PC-9 (cell line): ENCODE measurements at regions of chr20 and their contacts with region 1.

Region 1: GRCh38 chr20:47392015-47392720 is 35.7 kb upstream of the ZMYND8 start:
- DNase-seq: peak; percentile 80 to 100
- H3K4me3 ChIP-seq: peak overlapping the region; percentile 33; the same call in 1 of the 2 replicates
- H3K27ac ChIP-seq: peak overlapping the region; percentile 99
- H3K4me1 ChIP-seq: peaks cover 64% of the 10 kb centered on the region
- H3K27me3 ChIP-seq: no peaks in the 10 kb centered on the region
- CTCF ChIP-seq: no peak

Region 2: DNA sequence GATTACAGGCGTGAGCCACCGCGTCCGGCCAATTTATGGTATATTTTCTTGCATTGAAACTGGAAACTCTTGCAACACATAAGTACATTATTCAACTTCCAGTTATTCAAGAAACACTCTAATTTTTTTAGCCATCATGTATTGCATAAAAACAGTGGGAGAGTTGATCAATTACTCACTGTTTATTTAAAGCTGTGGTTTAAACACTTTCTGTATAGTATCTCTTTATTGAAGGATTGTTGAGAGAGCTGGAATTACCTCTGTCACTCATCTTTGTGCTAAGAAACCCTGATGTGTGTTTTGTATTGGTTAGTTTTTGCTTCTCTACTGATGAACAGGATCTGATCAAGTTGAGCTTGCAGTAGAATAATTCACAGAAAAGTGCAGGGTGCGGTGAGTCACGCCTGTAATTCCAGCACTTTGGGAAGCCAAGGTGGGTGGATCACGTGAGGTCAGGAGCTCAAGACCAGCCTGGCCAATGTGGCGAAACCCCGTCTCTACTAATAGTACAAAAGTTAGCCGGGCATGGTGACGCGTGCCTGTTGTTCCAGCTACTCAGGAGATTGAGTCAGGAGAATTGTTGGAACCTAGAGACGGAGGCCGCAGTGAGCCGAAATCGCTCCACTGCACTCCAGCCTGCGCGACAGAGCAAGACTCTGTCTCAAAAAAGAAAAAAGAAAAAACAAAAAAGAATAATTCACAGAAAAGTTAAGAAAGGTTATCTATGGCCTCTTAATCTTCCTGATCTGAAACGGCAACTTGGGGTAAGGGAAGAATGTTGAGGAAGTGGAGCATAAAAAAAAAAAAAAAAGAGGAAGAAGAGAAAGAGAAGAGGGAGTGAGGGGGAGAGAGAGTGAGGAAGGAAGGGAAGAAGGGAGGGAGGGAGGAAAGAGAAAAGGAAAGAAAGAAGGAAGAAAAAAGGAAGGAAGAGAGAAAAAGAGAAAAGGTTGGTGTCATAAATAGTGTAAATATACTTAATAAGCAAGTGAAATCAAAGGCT is 40.3 kb after region 1 on chr20:
- CTCF ChIA-PET with region 1: no interaction called
- POLR2A ChIA-PET with region 1: interaction called, 10 read pairs
- intact Hi-C with region 1: loop called (anchors 1 kb)
- DNase-seq: peak; percentile 87 to 98
- H3K4me3 ChIP-seq: peak overlapping the region; percentile 51
- H3K27ac ChIP-seq: peak overlapping the region; percentile 99
- H3K4me1 ChIP-seq: peaks cover 51% of the 10 kb centered on the region
- H3K27me3 ChIP-seq: no peaks in the 10 kb centered on the region
- CTCF ChIP-seq: no peak

Region 3: GRCh38 chr20:47493175-47493962 is 101.2 kb after region 1 on chr20:
- CTCF ChIA-PET with region 1: interaction called, 13 read pairs
- POLR2A ChIA-PET with region 1: interaction called, 4 read pairs
- intact Hi-C with region 1: no loop called
- DNase-seq: peak; percentile 89 to 94
- H3K4me3 ChIP-seq: peak overlapping the region; percentile 38
- H3K27ac ChIP-seq: peak overlapping the region; percentile 84
- H3K4me1 ChIP-seq: peaks cover 44% of the 10 kb centered on the region
- H3K27me3 ChIP-seq: no peaks in the 10 kb centered on the region
- CTCF ChIP-seq: no peak